Common myeloid progenitor, CD34-positive (primary cell): ENCODE measurements at regions of chr10 and their contacts with region 1.

Region 1: DNA sequence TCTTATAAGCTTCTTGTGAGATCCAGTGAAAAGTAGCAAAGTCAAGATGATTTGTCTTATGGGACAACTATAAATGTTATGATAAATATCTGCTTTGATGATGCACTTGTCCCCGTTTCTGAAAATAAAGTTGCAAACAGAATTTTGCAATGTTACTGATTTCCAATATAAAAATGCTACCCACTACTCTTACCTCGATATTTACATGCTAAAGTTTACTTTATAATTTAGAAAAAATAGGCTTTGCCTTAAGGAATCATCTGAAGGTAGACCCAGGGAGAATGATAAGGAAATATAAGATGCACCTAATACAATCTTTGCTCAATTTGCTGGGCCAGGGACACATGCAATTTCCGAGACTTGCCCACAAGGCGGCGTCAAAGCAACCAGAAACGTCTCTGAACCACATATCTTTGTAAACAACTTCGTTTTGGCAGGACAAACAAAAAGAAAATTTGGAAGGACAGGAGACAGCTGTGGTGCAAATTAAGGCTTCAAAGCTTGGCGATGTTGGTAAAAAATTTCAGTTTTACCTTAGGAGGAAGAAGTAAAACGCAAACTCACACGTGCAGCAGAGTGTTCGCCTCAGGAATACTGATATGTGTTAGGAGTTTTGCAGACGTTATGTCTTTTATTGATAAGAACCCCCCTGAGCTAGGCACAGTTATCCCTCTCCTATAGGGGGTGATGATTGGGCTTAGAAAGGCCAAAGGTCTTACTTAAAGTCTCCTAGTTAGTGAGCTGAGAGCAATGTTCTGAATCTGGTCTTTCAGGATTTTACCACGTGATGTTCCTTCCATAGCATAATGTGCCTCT is 134.4 kb downstream of the PRKCQ start:
- DNase-seq: peak; percentile 67 to 78 (median 76)
- H3K4me3 ChIP-seq: peak overlapping the region in 2 of 7 experiments; percentile 36 to 43
- H3K27ac ChIP-seq: peak overlapping the region in 1 of 2 experiments; percentile 64
- H3K4me1 ChIP-seq: peaks cover 0 to 5% (median 2%) of the 10 kb centered on the region in 4 experiments
- H3K27me3 ChIP-seq: no peaks in the 10 kb centered on the region

Region 2: DNA sequence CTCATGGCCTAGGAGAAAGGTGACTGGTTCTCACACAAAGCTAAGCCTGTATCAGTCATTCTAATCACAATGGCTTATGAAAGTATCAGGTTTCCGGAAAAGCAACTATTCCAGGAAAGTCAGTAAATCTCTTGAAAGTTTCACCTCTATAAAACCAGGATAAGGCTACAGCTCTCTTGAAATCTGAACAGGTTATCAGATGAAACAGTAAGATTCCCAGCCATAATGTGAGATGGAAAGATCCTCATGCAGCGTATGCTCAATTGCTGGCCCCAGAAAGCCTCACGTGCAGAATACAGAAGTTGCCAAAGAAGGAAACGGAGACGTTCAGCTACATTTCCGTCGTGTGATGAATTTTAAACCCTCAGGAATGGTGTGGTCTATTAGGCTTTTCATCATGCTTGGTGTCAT is 153.0 kb before region 1 on chr10:
- CTCF ChIA-PET with region 1: no interaction called
- POLR2A ChIA-PET with region 1: no interaction called
- DNase-seq: no peak
- H3K4me3 ChIP-seq: no peak overlapping the region
- H3K27ac ChIP-seq: no peak overlapping the region
- H3K4me1 ChIP-seq: peaks cover 0 to 6% (median 1%) of the 10 kb centered on the region in 4 experiments
- H3K27me3 ChIP-seq: no peaks in the 10 kb centered on the region

Region 3: GRCh38 chr10:6431861-6432260 is 13.8 kb before region 1 on chr10:
- CTCF ChIA-PET with region 1: interaction called, 10 read pairs
- POLR2A ChIA-PET with region 1: no interaction called
- DNase-seq: no peak
- H3K4me3 ChIP-seq: no peak overlapping the region
- H3K27ac ChIP-seq: no peak overlapping the region
- H3K4me1 ChIP-seq: no peaks in the 10 kb centered on the region
- H3K27me3 ChIP-seq: no peaks in the 10 kb centered on the region

Region 4: GRCh38 chr10:6473901-6474370 is 28.2 kb after region 1 on chr10:
- CTCF ChIA-PET with region 1: interaction called, 41 read pairs
- POLR2A ChIA-PET with region 1: no interaction called
- DNase-seq: peak; percentile 78 to 92 (median 89)
- H3K4me3 ChIP-seq: peak overlapping the region; percentile 14 to 73 (median 63)
- H3K27ac ChIP-seq: peak overlapping the region; percentile 85 to 88
- H3K4me1 ChIP-seq: peaks cover 21 to 68% (median 63%) of the 10 kb centered on the region in 4 experiments
- H3K27me3 ChIP-seq: no peaks in the 10 kb centered on the region

Region 5: DNA sequence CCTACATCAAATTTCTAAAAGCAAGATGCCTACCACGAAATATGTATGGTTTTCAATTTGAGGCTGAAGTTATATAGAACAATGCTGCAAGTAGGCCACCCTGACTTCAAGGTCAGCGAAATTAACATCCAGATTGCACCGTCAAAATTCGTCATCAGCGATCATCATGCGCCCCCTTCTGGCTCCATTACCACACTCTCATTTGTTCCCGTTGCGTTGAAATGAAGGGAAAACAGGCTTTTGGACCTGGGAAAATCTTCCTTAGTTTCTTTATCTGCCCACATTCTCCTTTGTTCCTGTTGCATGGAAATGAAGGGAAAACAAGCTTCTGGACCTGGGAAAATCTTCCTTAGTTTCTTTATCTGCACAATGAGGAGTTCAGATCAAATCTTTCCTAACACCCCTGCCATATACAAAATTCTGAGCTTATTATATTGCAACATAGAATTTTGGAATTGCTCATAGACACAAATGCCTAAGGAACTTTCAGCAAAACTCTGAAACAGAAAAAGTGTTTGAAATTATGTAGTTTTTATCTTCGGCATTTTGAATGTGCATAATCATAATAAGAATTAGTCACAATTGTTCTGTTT is 232.6 kb after region 1 on chr10:
- CTCF ChIA-PET with region 1: interaction called, 11 read pairs
- POLR2A ChIA-PET with region 1: no interaction called
- DNase-seq: peak; percentile 60 to 67 (median 64)
- H3K4me3 ChIP-seq: no peak overlapping the region
- H3K27ac ChIP-seq: no peak overlapping the region
- H3K4me1 ChIP-seq: peaks cover 0 to 4% (median 0%) of the 10 kb centered on the region in 4 experiments
- H3K27me3 ChIP-seq: no peaks in the 10 kb centered on the region